H1 (cell line): ENCODE measurements at regions of chr1 and their contacts with region 1.

Region 1: DNA sequence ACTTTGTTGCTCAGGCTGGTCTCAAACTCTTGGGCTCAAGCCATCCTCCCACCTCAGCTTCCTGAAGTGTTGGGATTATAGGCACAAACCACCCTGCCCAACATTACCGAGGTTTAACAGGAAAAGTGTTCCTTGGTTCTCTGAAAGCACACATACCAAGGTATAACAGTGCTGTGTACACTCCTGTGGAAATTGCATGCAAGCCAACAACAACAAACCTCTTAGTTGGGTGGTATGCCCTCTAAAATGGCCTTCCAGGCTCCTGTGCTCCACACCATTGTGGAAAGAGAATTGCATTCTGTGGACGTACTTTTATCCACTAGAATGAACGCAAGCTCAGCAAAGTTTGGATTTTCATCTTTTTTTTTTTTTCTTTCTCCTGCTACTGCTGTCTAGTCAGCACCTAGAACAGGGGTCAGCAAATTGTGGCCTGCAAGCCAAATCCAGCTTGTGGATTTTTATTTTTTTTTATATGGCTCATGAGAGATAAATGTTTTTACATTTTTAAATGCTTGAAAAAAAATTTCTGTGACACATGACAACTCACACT is 192.2 kb upstream of the TNR start:
- DNase-seq: no peak
- H3K4me3 ChIP-seq: no peak overlapping the region
- H3K27ac ChIP-seq: no peak overlapping the region
- H3K4me1 ChIP-seq: peaks cover 0 to 7% (median 3%) of the 10 kb centered on the region in 4 experiments; a peak in 2 of 7 replicates
- H3K27me3 ChIP-seq: no peaks in the 10 kb centered on the region
- CTCF ChIP-seq: no peak
- EP300 ChIP-seq: no peak
- POLR2A ChIP-seq: no peak
- RAD21 ChIP-seq: no peak

Region 2: GRCh38 chr1:175679981-175680652 is 255.5 kb before region 1 on chr1:
- CTCF ChIA-PET with region 1: no interaction called
- POLR2A ChIA-PET with region 1: no interaction called
- DNase-seq: no peak
- H3K4me3 ChIP-seq: no peak overlapping the region
- H3K27ac ChIP-seq: no peak overlapping the region
- H3K4me1 ChIP-seq: peaks cover 0 to 3% (median 0%) of the 10 kb centered on the region in 4 experiments; a peak in 1 of 7 replicates
- H3K27me3 ChIP-seq: no peaks in the 10 kb centered on the region
- CTCF ChIP-seq: no peak
- EP300 ChIP-seq: no peak
- POLR2A ChIP-seq: no peak
- RAD21 ChIP-seq: no peak

Region 3: GRCh38 chr1:175922254-175922881 is 13.3 kb before region 1 on chr1:
- CTCF ChIA-PET with region 1: interaction called, 14 read pairs
- POLR2A ChIA-PET with region 1: interaction called, 4 read pairs
- DNase-seq: peak in 1 of 2 experiments; percentile 34
- H3K4me3 ChIP-seq: peak overlapping the region in 1 of 4 experiments; percentile 35; a peak in 2 of 8 replicates
- H3K27ac ChIP-seq: peak overlapping the region; percentile 53; the same call in 1 of the 2 replicates
- H3K4me1 ChIP-seq: peaks cover 3 to 16% (median 14%) of the 10 kb centered on the region in 4 experiments
- H3K27me3 ChIP-seq: peaks cover 23 to 43% (median 39%) of the 10 kb centered on the region in 4 experiments
- CTCF ChIP-seq: no peak
- EP300 ChIP-seq: peak in 1 of 2 experiments; percentile 53; a peak in 1 of 3 replicates
- POLR2A ChIP-seq: peak in 1 of 2 experiments; percentile 53; a peak in 1 of 3 replicates
- RAD21 ChIP-seq: no peak

Region 4: GRCh38 chr1:176033881-176034280 is 98.2 kb after region 1 on chr1:
- CTCF ChIA-PET with region 1: no interaction called
- POLR2A ChIA-PET with region 1: no interaction called
- DNase-seq: no peak
- H3K4me3 ChIP-seq: no peak overlapping the region
- H3K27ac ChIP-seq: no peak overlapping the region
- H3K4me1 ChIP-seq: no peaks in the 10 kb centered on the region
- H3K27me3 ChIP-seq: no peaks in the 10 kb centered on the region
- CTCF ChIP-seq: no peak
- EP300 ChIP-seq: no peak
- POLR2A ChIP-seq: no peak
- RAD21 ChIP-seq: no peak